Naive thymus-derived CD8-positive, alpha-beta T cell (primary cell): ENCODE measurements at regions of chr17 and their contacts with region 1.

Region 1: DNA sequence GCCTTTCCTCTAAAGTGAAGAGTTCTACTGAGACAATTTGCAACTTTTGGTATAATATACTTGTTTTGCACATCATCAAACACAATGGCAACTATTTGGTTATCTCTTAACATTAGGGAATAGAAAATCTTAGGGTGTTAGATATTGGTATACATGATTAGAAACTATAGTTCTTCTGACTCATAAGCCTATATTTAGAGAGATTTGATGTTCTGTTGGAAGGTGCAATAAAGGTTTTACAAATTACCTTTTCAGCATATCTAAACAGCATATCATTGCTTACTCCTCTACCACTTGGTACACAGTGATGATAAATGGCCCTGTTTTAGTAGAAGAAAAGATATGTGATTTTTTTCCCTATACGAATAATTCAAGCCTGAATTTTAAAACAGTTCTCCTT is 6.2 kb downstream of the EVI2B start:
- DNase-seq: no peak
- ATAC-seq: no peak
- H3K4me3 Mint-ChIP-seq: peak overlapping the region; percentile 79 to 98 (median 94)
- H3K27ac Mint-ChIP-seq: peak overlapping the region; percentile 94 to 99 (median 98)
- H3K4me1 Mint-ChIP-seq: peaks cover 21 to 81% (median 67%) of the 10 kb centered on the region in 4 donors
- H3K27me3 Mint-ChIP-seq: no peaks in the 10 kb centered on the region

Region 2: DNA sequence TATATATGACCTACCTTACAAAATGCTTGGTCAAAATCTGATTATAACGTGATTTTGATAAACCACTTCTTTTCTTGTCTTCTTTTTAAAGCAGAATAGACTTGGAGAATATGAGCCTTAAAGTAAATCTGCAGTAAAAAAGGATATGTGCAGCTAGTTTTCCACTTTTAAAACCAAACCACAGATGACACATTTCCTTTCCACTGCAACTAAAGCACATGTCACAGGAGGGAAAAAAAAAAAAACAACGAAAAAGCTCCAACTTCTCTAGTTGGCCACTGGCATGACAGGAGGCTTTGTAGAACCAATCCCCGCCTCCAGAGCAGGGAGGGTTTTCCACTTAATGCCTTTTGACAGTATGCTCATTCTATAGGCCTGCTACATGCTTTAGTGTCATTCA is 13.8 kb after region 1 on chr17 and contains the start of gene EVI2A:
- POLR2A ChIA-PET with region 1: interaction called, 90 read pairs
- DNase-seq: peak; percentile 38 to 90 (median 80)
- ATAC-seq: peak; percentile 81 to 94
- H3K4me3 Mint-ChIP-seq: peak within 1 kb of the TSS; percentile 76 to 96 (median 89)
- H3K27ac Mint-ChIP-seq: peak within 1 kb of the TSS; percentile 82 to 98 (median 95)
- H3K4me1 Mint-ChIP-seq: peaks cover 17 to 39% (median 27%) of the 10 kb centered on the region in 4 donors
- H3K27me3 Mint-ChIP-seq: no peaks in the 10 kb centered on the region
- polyA plus RNA-seq, gene EVI2A: 44.3 to 57.0 (median 53.3) TPM

Region 3: GRCh38 chr17:31357831-31358394 is 50.3 kb after region 1 on chr17:
- POLR2A ChIA-PET with region 1: interaction called, 10 read pairs
- DNase-seq: no peak
- ATAC-seq: no peak
- H3K4me3 Mint-ChIP-seq: no peak overlapping the region
- H3K27ac Mint-ChIP-seq: no peak overlapping the region
- H3K4me1 Mint-ChIP-seq: peaks cover 0 to 4% (median 0%) of the 10 kb centered on the region in 4 donors
- H3K27me3 Mint-ChIP-seq: no peaks in the 10 kb centered on the region